ENCODE measurements at regions of chr1 and their contacts with region 1.

Region 1: GRCh38 chr1:28914228-28915030 is at the start of gene EPB41:
- DNase-seq: peak; percentile 84 to 94 (median 88)
- ATAC-seq: peak; percentile 81 to 82
- H3K4me3 Mint-ChIP-seq: peak within 1 kb of the TSS; percentile 89 to 100 (median 99)
- H3K27ac Mint-ChIP-seq: peak within 1 kb of the TSS; percentile 89 to 99 (median 98)
- H3K4me1 Mint-ChIP-seq: peaks cover 27 to 52% (median 46%) of the 10 kb centered on the region in 4 donors
- H3K27me3 Mint-ChIP-seq: no peaks in the 10 kb centered on the region
- polyA plus RNA-seq, gene EPB41: 84.1 to 99.9 (median 92.9) TPM

Region 2: DNA sequence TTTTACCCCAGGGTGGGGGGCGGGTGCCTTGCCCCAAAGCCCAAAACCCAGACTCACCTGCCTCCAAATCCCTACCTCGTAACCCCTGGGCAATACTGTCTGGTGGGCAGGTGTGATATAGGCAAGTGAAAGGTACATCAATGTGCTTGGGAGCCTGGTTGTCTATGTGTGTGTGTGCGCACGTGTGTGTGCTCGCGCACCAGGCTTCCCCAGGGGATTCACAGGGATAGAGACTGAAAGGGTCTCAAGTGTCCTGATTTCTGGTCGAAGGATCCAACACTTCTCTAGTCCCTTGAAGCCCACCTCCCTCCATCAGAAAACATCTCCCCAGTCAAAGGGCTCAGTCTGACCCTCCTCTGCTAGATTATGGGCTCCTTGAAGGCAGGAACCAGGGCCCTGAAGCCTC is 29.0 kb before region 1 on chr1:
- POLR2A ChIA-PET with region 1: interaction called, 11 read pairs
- DNase-seq: no peak
- ATAC-seq: no peak
- H3K4me3 Mint-ChIP-seq: peak overlapping the region in 6 of 10 donors; percentile 8 to 92 (median 83)
- H3K27ac Mint-ChIP-seq: peak overlapping the region in 9 of 10 donors; percentile 80 to 97 (median 94)
- H3K4me1 Mint-ChIP-seq: peaks cover 27 to 68% (median 62%) of the 10 kb centered on the region in 4 donors
- H3K27me3 Mint-ChIP-seq: no peaks in the 10 kb centered on the region

Region 3: GRCh38 chr1:28902738-28903137 is 11.7 kb before region 1 on chr1:
- POLR2A ChIA-PET with region 1: interaction called, 17 read pairs
- DNase-seq: no peak
- ATAC-seq: no peak
- H3K4me3 Mint-ChIP-seq: no peak overlapping the region
- H3K27ac Mint-ChIP-seq: peak overlapping the region in 1 of 10 donors; percentile 36
- H3K4me1 Mint-ChIP-seq: peaks cover 19 to 23% (median 20%) of the 10 kb centered on the region in 4 donors
- H3K27me3 Mint-ChIP-seq: no peaks in the 10 kb centered on the region

Region 4: DNA sequence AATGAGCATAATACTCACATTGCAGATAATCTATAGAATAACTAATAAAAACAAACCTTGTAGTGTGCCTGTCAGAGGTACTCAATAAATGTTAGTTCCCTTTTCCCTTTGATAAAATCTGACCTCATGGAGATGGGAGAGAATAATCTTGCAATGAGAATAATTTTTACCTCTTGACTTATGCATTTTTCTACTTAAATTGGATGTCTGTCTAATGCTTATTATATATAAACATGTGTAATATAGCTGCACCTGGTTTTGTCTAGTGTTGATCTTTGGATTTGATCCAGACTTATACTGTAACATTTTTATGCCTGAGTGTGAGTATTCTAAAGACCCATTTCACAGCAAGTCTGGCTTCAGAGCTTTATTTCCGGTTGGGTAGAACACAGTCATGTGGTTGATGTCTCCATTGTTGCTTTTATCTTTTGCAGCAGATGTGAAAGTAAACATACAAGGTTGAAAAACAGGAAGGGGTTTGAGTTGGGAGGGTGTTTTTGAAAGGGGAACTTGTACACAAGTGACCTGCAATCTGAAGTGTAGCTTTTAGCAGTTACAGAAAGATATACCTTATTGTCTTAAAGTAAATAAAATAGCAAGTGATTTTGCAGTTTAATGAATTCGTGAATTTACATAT is 12.3 kb after region 1 on chr1:
- POLR2A ChIA-PET with region 1: interaction called, 61 read pairs
- DNase-seq: peak in 9 of 10 donors; percentile 21 to 83 (median 59)
- ATAC-seq: peak; percentile 82 to 94
- H3K4me3 Mint-ChIP-seq: peak overlapping the region; percentile 45 to 79 (median 70)
- H3K27ac Mint-ChIP-seq: peak overlapping the region; percentile 15 to 97 (median 88)
- H3K4me1 Mint-ChIP-seq: peaks cover 23 to 80% (median 67%) of the 10 kb centered on the region in 4 donors
- H3K27me3 Mint-ChIP-seq: no peaks in the 10 kb centered on the region

Region 5: GRCh38 chr1:28933277-28933676 is 18.8 kb after region 1 on chr1:
- POLR2A ChIA-PET with region 1: interaction called, 61 read pairs
- DNase-seq: peak in 3 of 10 donors; percentile 14 to 44 (median 27)
- ATAC-seq: peak; percentile 63 to 78
- H3K4me3 Mint-ChIP-seq: peak overlapping the region in 9 of 10 donors; percentile 42 to 79 (median 57)
- H3K27ac Mint-ChIP-seq: peak overlapping the region in 9 of 10 donors; percentile 1 to 83 (median 64)
- H3K4me1 Mint-ChIP-seq: peaks cover 28 to 82% (median 70%) of the 10 kb centered on the region in 4 donors
- H3K27me3 Mint-ChIP-seq: no peaks in the 10 kb centered on the region

Region 6: GRCh38 chr1:29096231-29096886 is 181.9 kb after region 1 on chr1:
- POLR2A ChIA-PET with region 1: no interaction called
- DNase-seq: no peak
- ATAC-seq: no peak
- H3K4me3 Mint-ChIP-seq: no peak overlapping the region
- H3K27ac Mint-ChIP-seq: peak overlapping the region in 4 of 10 donors; percentile 7 to 76 (median 35)
- H3K4me1 Mint-ChIP-seq: peaks cover 0 to 7% (median 4%) of the 10 kb centered on the region in 4 donors
- H3K27me3 Mint-ChIP-seq: no peaks in the 10 kb centered on the region

Region 7: GRCh38 chr1:29324771-29325668 is 410.6 kb after region 1 on chr1:
- POLR2A ChIA-PET with region 1: no interaction called
- DNase-seq: no peak
- ATAC-seq: no peak
- H3K4me3 Mint-ChIP-seq: no peak overlapping the region
- H3K27ac Mint-ChIP-seq: peak overlapping the region in 1 of 10 donors; percentile 12
- H3K4me1 Mint-ChIP-seq: no peaks in the 10 kb centered on the region
- H3K27me3 Mint-ChIP-seq: peaks cover 0 to 12% (median 5%) of the 10 kb centered on the region in 5 donors

Measured in naive thymus-derived CD8-positive, alpha-beta T cell (primary cell).